CD4-positive, alpha-beta T cell (primary cell): ENCODE measurements at regions of chr4 and their contacts with region 1.

Region 1: GRCh38 chr4:109815151-109816081 is at the start of gene GAR1:
- DNase-seq: peak; percentile 68 to 96 (median 82)
- ATAC-seq: peak; percentile 91
- H3K4me3 ChIP-seq: peak within 1 kb of the TSS; percentile 67
- H3K4me3 Mint-ChIP-seq: peak within 1 kb of the TSS; percentile 96
- H3K27ac ChIP-seq: peak within 1 kb of the TSS; percentile 90 to 96
- H3K27ac Mint-ChIP-seq: peak within 1 kb of the TSS; percentile 98
- H3K4me1 ChIP-seq: peaks cover 18% of the 10 kb centered on the region
- H3K4me1 Mint-ChIP-seq: peaks cover 42% of the 10 kb centered on the region
- H3K27me3 ChIP-seq: no peaks in the 10 kb centered on the region
- H3K27me3 Mint-ChIP-seq: no peaks in the 10 kb centered on the region
- CTCF ChIP-seq: no peak
- total RNA-seq, gene GAR1: 8.4 to 9.6 TPM

Region 2: DNA sequence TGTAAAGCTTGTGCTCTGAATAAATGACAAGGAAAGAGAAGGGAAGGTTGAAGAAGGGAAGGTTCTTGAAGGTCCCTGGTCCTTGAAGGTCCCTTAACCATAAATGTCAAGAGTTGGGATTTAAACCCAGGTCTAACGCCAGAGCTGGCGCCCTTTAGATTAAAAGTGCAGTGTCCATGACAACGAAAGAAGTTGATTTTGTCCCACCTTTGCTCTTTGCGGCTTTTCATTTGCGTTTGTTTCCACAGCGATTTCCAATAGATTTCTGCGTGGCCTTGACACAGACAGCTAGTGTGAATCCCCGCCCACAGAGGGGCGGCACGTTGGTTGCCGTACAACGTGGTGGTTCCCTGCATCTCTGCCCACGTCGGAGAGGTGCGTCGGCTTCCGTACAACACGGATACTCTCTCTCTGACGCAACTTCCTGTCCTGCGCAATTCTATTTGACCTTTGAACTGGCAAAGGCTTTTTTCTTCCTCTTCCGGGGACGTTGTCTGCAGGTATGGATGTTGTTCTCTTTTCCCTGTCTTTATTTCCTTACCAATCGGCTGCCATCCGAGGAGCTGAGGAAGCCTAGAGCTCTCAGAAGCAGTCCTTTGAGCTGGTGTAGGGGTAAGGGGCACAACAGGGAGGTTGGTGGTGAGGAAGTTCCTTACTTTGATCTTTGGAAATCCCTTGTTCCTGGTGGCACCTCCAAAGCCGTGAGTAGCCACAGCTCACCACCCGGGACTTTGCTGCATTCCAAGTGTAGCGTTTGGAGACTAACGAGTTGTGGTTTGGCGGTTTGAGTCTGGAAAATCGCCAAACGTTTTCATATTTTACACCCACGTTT is 1195.1 kb before region 1 on chr4 and contains the start of gene RPL34:
- CTCF ChIA-PET with region 1: no interaction called
- POLR2A ChIA-PET with region 1: no interaction called
- intact Hi-C with region 1: loop called in 1 of 2 experiments (anchors 10 kb)
- DNase-seq: peak; percentile 93 to 99 (median 97)
- ATAC-seq: peak; percentile 98
- H3K4me3 ChIP-seq: peak within 1 kb of the TSS; percentile 78
- H3K4me3 Mint-ChIP-seq: peak within 1 kb of the TSS; percentile 97
- H3K27ac ChIP-seq: peak within 1 kb of the TSS; percentile 85
- H3K27ac Mint-ChIP-seq: peak within 1 kb of the TSS; percentile 99
- H3K4me1 ChIP-seq: peaks cover 36% of the 10 kb centered on the region
- H3K4me1 Mint-ChIP-seq: peaks cover 65% of the 10 kb centered on the region
- H3K27me3 ChIP-seq: no peaks in the 10 kb centered on the region
- H3K27me3 Mint-ChIP-seq: no peaks in the 10 kb centered on the region
- CTCF ChIP-seq: no peak
- total RNA-seq, gene RPL34: 3,283 to 3,551 TPM

Region 3: DNA sequence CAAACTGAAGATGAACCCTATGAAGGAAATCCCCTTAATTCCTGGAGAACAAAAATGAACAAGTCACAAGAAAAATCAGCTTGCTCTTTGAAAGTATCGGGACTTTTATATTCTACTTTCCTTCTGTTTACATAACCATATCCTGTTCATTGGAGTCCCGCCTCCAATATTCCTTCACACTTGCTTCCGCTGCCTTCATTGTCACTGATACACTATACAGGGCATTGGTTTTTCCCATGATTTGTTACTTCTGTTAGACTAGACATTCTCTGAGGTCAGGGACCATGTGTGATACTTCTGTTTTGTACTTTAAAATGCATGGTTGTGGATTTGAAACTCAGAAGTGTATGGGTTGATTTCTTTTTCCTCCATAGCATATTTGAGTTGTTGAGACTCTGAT is 236.6 kb before region 1 on chr4:
- CTCF ChIA-PET with region 1: no interaction called
- POLR2A ChIA-PET with region 1: no interaction called
- intact Hi-C with region 1: no loop called
- DNase-seq: no peak
- ATAC-seq: no peak
- H3K4me3 ChIP-seq: no peak overlapping the region
- H3K4me3 Mint-ChIP-seq: no peak overlapping the region
- H3K27ac ChIP-seq: no peak overlapping the region
- H3K27ac Mint-ChIP-seq: peak overlapping the region; percentile 78
- H3K4me1 ChIP-seq: peaks cover 18% of the 10 kb centered on the region
- H3K4me1 Mint-ChIP-seq: peaks cover 75% of the 10 kb centered on the region
- H3K27me3 ChIP-seq: no peaks in the 10 kb centered on the region
- H3K27me3 Mint-ChIP-seq: no peaks in the 10 kb centered on the region
- CTCF ChIP-seq: no peak

Region 4: GRCh38 chr4:109658871-109659410 is 156.5 kb before region 1 on chr4:
- CTCF ChIA-PET with region 1: no interaction called
- POLR2A ChIA-PET with region 1: no interaction called
- intact Hi-C with region 1: no loop called
- DNase-seq: peak in 5 of 14 experiments; percentile 22 to 59 (median 45)
- ATAC-seq: peak; percentile 78
- H3K4me3 ChIP-seq: no peak overlapping the region
- H3K4me3 Mint-ChIP-seq: no peak overlapping the region
- H3K27ac ChIP-seq: no peak overlapping the region
- H3K27ac Mint-ChIP-seq: no peak overlapping the region
- H3K4me1 ChIP-seq: peaks cover 37% of the 10 kb centered on the region
- H3K4me1 Mint-ChIP-seq: peaks cover 64% of the 10 kb centered on the region
- H3K27me3 ChIP-seq: no peaks in the 10 kb centered on the region
- H3K27me3 Mint-ChIP-seq: no peaks in the 10 kb centered on the region
- CTCF ChIP-seq: peak; percentile 61

Region 5: DNA sequence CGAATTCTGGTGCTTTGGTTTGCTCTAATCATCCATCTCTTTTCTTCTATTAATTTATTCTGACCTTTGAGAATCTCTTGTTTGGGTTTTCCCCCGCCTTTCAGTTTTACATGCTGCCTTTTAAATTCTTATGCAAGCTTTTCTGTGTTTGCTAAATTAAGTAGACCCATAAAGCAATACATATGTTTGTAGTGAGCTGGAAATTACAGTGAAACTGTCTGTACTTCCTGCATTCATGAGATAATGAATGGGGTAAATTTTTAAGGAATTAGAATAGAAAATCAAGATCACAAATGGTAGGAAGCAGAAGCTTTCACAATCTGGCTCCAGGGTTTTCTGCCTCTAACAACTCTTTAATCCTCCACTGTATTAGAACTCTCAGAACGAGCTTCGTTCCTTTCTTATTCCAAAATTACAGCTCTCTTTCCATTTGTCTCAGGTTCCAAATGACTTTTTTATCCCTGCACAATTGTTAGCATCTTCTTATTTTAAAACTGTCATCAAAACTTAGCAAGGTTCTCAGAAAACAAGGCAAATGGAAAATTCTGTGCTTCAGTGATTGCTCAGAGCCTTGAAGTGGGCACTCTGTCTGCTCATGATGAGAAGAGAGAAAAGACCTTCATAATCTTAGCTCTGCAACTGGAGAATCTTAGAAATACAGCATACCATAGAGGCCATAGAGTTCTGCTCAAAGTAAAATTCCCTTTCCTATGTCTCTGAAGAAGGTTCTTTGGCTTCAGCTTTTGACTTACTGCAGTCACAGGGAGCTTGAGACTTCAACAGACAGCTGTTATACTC is 205.4 kb after region 1 on chr4:
- CTCF ChIA-PET with region 1: no interaction called
- POLR2A ChIA-PET with region 1: no interaction called
- intact Hi-C with region 1: no loop called
- DNase-seq: no peak
- ATAC-seq: no peak
- H3K4me3 ChIP-seq: no peak overlapping the region
- H3K4me3 Mint-ChIP-seq: no peak overlapping the region
- H3K27ac ChIP-seq: no peak overlapping the region
- H3K27ac Mint-ChIP-seq: no peak overlapping the region
- H3K4me1 ChIP-seq: no peaks in the 10 kb centered on the region
- H3K4me1 Mint-ChIP-seq: no peaks in the 10 kb centered on the region
- H3K27me3 ChIP-seq: no peaks in the 10 kb centered on the region
- H3K27me3 Mint-ChIP-seq: no peaks in the 10 kb centered on the region
- CTCF ChIP-seq: no peak

Region 6: DNA sequence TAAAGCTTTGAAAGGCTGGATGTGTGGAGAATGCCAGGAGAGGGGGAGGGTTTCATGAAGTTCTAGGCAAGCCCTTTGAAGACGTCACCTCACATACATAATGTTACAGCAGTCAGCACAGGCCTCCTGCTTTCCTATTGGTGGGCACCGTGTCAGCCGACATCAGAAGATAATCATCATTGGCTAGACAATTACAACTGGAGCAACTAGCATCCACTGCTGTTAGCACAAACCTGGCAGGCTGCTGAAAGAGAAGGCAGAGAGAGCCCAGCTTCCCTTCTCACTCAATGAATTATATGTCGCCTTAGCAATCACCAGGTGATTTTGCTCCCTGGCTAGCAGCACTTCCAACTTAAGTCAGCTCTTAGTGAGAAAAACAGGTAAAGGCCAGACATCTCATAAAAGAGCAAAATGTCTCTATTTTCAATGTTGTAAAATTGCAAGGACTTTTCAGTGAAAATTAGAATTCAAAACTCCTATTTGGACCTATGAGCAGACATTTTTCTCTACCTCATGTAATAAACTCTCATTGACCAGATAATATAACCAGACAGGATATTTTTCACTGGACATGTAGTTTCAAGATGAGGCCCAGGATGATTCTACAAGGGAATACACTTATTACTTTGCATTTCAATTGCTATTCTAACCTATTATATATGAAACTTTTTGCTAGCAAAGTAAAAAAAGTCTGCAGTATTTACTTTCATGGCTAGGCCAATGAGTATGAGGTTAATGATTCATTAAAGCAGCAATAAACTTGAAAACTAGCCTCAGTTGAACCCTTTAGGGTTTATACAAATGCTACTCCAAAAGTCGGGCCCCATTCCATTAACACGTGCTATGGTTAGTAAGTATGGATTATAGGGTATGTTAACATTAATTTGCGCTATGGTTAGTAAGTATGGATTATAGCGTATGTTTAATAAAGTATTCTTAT is 378.7 kb after region 1 on chr4:
- CTCF ChIA-PET with region 1: no interaction called
- POLR2A ChIA-PET with region 1: no interaction called
- intact Hi-C with region 1: loop called in 1 of 2 experiments (anchors 10 kb)
- DNase-seq: peak; percentile 53 to 92 (median 68)
- ATAC-seq: peak; percentile 90
- H3K4me3 ChIP-seq: no peak overlapping the region
- H3K4me3 Mint-ChIP-seq: peak overlapping the region; percentile 58
- H3K27ac ChIP-seq: peak overlapping the region; percentile 25 to 35
- H3K27ac Mint-ChIP-seq: peak overlapping the region; percentile 87
- H3K4me1 ChIP-seq: peaks cover 21% of the 10 kb centered on the region
- H3K4me1 Mint-ChIP-seq: peaks cover 41% of the 10 kb centered on the region
- H3K27me3 ChIP-seq: no peaks in the 10 kb centered on the region
- H3K27me3 Mint-ChIP-seq: no peaks in the 10 kb centered on the region
- CTCF ChIP-seq: no peak